CD8-positive, alpha-beta T cell (primary cell): ENCODE measurements at regions of chr12 and their contacts with region 1.

Region 1: GRCh38 chr12:56041552-56042429 is at the start of gene RPS26:
- DNase-seq: peak; percentile 79 to 99 (median 92)
- ATAC-seq: peak; percentile 93
- H3K4me3 ChIP-seq: peak within 1 kb of the TSS; percentile 71 to 83
- H3K4me3 Mint-ChIP-seq: peak within 1 kb of the TSS; percentile 99
- H3K27ac ChIP-seq: peak within 1 kb of the TSS; percentile 75 to 95
- H3K27ac Mint-ChIP-seq: peak within 1 kb of the TSS; percentile 99
- H3K4me1 ChIP-seq: peaks cover 29% of the 10 kb centered on the region
- H3K4me1 Mint-ChIP-seq: peaks cover 42% of the 10 kb centered on the region
- H3K27me3 ChIP-seq: no peaks in the 10 kb centered on the region
- H3K27me3 Mint-ChIP-seq: no peaks in the 10 kb centered on the region
- CTCF ChIP-seq: peak; percentile 48
- total RNA-seq, gene RPS26: 33.8 to 36.7 TPM

Region 2: DNA sequence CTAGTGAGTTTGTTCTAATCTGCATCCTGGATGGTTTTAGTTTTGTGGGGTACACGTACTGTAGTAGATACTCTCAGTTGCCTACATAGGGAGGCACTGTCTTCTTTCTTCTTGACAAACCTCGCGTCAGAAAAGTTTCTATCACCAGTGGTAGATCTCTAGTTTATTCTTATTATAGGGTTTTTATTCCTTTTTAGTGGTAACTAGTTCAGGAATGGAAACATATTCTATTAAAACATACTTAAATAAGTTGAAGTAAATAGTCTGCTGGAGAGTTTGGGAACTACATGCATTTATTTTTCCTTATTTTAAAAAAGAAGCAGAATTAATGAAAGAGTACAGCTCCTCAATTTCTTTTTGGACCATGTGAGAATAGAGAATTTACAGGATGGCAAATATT is 949.2 kb before region 1 on chr12:
- CTCF ChIA-PET with region 1: no interaction called
- POLR2A ChIA-PET with region 1: no interaction called
- intact Hi-C with region 1: no loop called
- DNase-seq: no peak
- ATAC-seq: no peak
- H3K4me3 ChIP-seq: no peak overlapping the region
- H3K4me3 Mint-ChIP-seq: no peak overlapping the region
- H3K27ac ChIP-seq: no peak overlapping the region
- H3K27ac Mint-ChIP-seq: no peak overlapping the region
- H3K4me1 ChIP-seq: no peaks in the 10 kb centered on the region
- H3K4me1 Mint-ChIP-seq: no peaks in the 10 kb centered on the region
- H3K27me3 ChIP-seq: no peaks in the 10 kb centered on the region
- H3K27me3 Mint-ChIP-seq: peaks cover 20% of the 10 kb centered on the region
- CTCF ChIP-seq: no peak

Region 3: DNA sequence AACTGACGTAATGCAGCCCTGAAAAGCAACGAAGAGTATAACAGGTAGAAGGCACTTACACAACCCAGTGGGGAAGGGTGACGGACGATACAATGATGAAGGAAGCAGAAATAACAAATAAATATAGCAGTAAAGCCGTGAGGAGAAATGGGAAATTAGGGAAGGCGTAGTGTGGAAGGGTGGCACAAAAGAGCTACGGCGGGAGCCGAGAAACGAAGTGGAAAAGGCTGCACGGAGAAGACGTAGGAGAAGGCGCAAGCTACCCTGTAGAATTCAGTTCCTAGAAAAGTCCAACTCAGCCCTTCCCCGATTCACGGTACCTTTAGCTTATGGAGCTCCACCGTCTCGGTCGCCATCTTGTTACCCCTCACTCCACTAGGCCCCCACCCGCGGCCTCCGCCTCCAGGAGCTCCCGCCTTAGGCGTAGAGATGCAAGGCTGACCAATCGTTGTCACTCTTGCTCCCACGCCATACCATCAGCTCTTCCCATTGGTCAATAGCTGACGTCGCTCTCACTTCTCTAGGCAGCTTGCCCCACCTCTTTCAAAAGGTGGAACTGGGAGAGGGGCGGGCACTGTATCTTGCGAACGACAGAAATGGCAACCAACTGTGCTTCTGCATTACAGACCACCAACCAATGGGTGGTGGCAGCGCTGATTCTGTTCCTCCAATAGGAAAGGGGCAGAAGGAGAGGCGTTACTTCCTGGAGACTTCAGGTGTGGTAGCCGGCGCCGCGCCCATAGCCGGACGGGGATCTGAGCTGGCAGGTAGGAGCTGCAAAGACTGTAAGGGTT is 224.2 kb before region 1 on chr12 and contains the starts of genes ORMDL2 and SARNP:
- CTCF ChIA-PET with region 1: interaction called, 5 read pairs
- POLR2A ChIA-PET with region 1: no interaction called
- intact Hi-C with region 1: loop called (anchors 1 kb)
- DNase-seq: peak; percentile 88 to 100 (median 94)
- ATAC-seq: peak; percentile 91
- H3K4me3 ChIP-seq: peak within 1 kb of the TSS; percentile 81 to 89
- H3K4me3 Mint-ChIP-seq: no peak within 1 kb of the TSS
- H3K27ac ChIP-seq: peak within 1 kb of the TSS; percentile 81 to 89
- H3K27ac Mint-ChIP-seq: no peak within 1 kb of the TSS
- H3K4me1 ChIP-seq: peaks cover 38% of the 10 kb centered on the region
- H3K4me1 Mint-ChIP-seq: peaks cover 44% of the 10 kb centered on the region
- H3K27me3 ChIP-seq: no peaks in the 10 kb centered on the region
- H3K27me3 Mint-ChIP-seq: no peaks in the 10 kb centered on the region
- CTCF ChIP-seq: no peak
- total RNA-seq, gene ORMDL2: 13.2 to 15.1 TPM
- total RNA-seq, gene SARNP: 48.0 to 50.3 TPM

Region 4: DNA sequence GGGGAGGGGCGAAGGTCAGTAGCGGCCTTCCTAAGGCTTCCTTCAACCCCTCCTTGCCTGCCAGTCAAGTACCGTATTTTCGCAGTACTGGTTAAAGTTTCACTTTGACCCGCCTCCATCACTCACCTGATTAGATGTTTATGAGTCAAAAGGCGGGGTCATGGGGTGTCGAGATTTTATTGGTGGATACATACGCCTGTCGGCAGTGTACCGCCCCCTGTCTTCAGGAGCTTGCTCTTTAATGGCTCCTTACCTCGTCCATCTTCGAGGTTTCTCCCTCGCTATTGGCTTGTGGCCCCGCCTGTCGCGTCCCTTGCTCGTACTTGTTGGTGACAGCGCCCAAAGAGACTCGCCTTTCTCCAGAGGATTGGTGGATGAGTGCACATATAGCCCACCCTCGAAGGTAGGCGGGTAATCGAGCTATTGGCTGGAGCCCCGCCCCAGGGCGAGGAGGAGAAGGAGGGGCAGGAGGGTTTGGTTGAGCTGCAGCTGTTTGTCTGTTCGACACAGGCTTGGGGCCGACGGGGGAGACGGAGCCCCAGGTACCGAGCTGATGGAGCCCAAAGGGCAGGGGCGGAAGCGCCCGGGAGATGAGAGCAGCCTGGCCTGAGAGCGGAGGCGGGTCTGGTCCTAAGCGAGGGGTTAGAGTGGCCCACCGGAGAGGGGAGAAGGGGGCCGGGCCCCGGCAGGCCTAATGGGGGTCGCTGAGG is 68.0 kb before region 1 on chr12 and contains the start of gene RAB5B:
- CTCF ChIA-PET with region 1: interaction called, 3 read pairs
- POLR2A ChIA-PET with region 1: interaction called, 5 read pairs
- intact Hi-C with region 1: loop called in 1 of 2 experiments (anchors 1 kb)
- DNase-seq: peak; percentile 94 to 100 (median 97)
- ATAC-seq: peak; percentile 87
- H3K4me3 ChIP-seq: peak within 1 kb of the TSS; percentile 81 to 84
- H3K4me3 Mint-ChIP-seq: no peak within 1 kb of the TSS
- H3K27ac ChIP-seq: peak within 1 kb of the TSS; percentile 76 to 90
- H3K27ac Mint-ChIP-seq: no peak within 1 kb of the TSS
- H3K4me1 ChIP-seq: peaks cover 18% of the 10 kb centered on the region
- H3K4me1 Mint-ChIP-seq: peaks cover 27% of the 10 kb centered on the region
- H3K27me3 ChIP-seq: no peaks in the 10 kb centered on the region
- H3K27me3 Mint-ChIP-seq: no peaks in the 10 kb centered on the region
- CTCF ChIP-seq: no peak
- total RNA-seq, gene RAB5B: 16.1 to 16.8 TPM

Region 5: GRCh38 chr12:56021889-56022497 is 19.8 kb before region 1 on chr12:
- CTCF ChIA-PET with region 1: no interaction called
- POLR2A ChIA-PET with region 1: no interaction called
- intact Hi-C with region 1: no loop called
- DNase-seq: no peak
- ATAC-seq: peak; percentile 23
- H3K4me3 ChIP-seq: peak overlapping the region; percentile 11 to 17
- H3K4me3 Mint-ChIP-seq: peak overlapping the region; percentile 80
- H3K27ac ChIP-seq: no peak overlapping the region
- H3K27ac Mint-ChIP-seq: peak overlapping the region; percentile 69
- H3K4me1 ChIP-seq: peaks cover 21% of the 10 kb centered on the region
- H3K4me1 Mint-ChIP-seq: peaks cover 17% of the 10 kb centered on the region
- H3K27me3 ChIP-seq: no peaks in the 10 kb centered on the region
- H3K27me3 Mint-ChIP-seq: no peaks in the 10 kb centered on the region
- CTCF ChIP-seq: no peak

Region 6: GRCh38 chr12:56078990-56079664 is 37.3 kb after region 1 on chr12:
- CTCF ChIA-PET with region 1: interaction called, 3 read pairs
- POLR2A ChIA-PET with region 1: interaction called, 3 read pairs
- intact Hi-C with region 1: loop called in 1 of 2 experiments (anchors 2 kb)
- DNase-seq: peak; percentile 10 to 74 (median 52)
- ATAC-seq: peak; percentile 64
- H3K4me3 ChIP-seq: peak overlapping the region; percentile 60 to 72
- H3K4me3 Mint-ChIP-seq: peak overlapping the region; percentile 85
- H3K27ac ChIP-seq: no peak overlapping the region
- H3K27ac Mint-ChIP-seq: no peak overlapping the region
- H3K4me1 ChIP-seq: peaks cover 18% of the 10 kb centered on the region
- H3K4me1 Mint-ChIP-seq: peaks cover 14% of the 10 kb centered on the region
- H3K27me3 ChIP-seq: peaks cover 3 to 12% of the 10 kb centered on the region in 2 experiments
- H3K27me3 Mint-ChIP-seq: peaks cover 2% of the 10 kb centered on the region
- CTCF ChIP-seq: peak; percentile 56

Region 7: DNA sequence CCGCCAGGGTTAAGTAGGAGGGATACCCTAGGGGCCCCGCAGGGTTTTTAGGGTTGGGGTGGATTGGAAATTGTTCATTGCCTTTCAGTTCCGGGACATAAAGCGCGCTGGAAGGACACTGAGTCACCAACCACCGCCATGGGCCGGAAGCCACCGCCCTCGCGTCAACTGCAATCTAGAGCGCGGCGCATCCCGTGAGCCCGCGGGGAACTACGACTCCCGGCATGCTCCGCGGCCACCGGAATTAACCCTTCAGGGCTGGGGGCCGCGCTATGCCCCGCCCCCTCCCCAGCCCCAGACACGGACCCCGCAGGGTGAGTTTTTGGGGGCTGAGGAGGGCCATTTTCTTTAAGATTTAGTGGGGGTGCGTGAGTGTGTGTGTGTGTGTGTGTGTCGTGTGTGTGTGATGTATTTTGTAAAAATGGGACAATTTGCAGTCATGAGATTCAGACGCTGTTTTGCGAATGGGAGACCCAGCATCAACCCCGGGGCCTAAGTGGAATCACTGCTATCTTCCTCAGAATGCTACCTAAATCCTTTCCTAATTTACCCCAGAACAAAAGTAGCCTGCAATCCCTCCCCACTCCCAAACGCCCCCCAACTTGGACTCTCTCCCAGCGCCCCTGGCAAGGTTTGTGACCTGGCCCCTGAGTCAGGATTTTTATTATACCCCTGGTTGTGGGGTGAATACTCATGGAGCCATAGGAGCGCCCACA is 110.7 kb after region 1 on chr12 and contains the start of gene MYL6B:
- CTCF ChIA-PET with region 1: interaction called, 3 read pairs
- POLR2A ChIA-PET with region 1: no interaction called
- intact Hi-C with region 1: loop called in 1 of 2 experiments (anchors 1 kb)
- DNase-seq: peak; percentile 80 to 96 (median 93)
- ATAC-seq: peak; percentile 90
- H3K4me3 ChIP-seq: peak within 1 kb of the TSS; percentile 65 to 95
- H3K4me3 Mint-ChIP-seq: peak within 1 kb of the TSS; percentile 90
- H3K27ac ChIP-seq: peak within 1 kb of the TSS; percentile 75 to 90
- H3K27ac Mint-ChIP-seq: peak within 1 kb of the TSS; percentile 99
- H3K4me1 ChIP-seq: peaks cover 30% of the 10 kb centered on the region
- H3K4me1 Mint-ChIP-seq: peaks cover 29% of the 10 kb centered on the region
- H3K27me3 ChIP-seq: no peaks in the 10 kb centered on the region
- H3K27me3 Mint-ChIP-seq: no peaks in the 10 kb centered on the region
- CTCF ChIP-seq: no peak
- total RNA-seq, gene MYL6B: 4.0 to 5.9 TPM

Region 8: GRCh38 chr12:56359851-56360767 is 318.3 kb after region 1 on chr12 and contains the start of gene STAT2:
- CTCF ChIA-PET with region 1: no interaction called
- POLR2A ChIA-PET with region 1: no interaction called
- intact Hi-C with region 1: loop called in 1 of 2 experiments (anchors 1 kb)
- DNase-seq: peak; percentile 98 to 100 (median 99)
- ATAC-seq: peak; percentile 93
- H3K4me3 ChIP-seq: peak within 1 kb of the TSS; percentile 78 to 81
- H3K4me3 Mint-ChIP-seq: peak within 1 kb of the TSS; percentile 95
- H3K27ac ChIP-seq: peak within 1 kb of the TSS; percentile 76 to 78
- H3K27ac Mint-ChIP-seq: peak within 1 kb of the TSS; percentile 95
- H3K4me1 ChIP-seq: peaks cover 23% of the 10 kb centered on the region
- H3K4me1 Mint-ChIP-seq: peaks cover 34% of the 10 kb centered on the region
- H3K27me3 ChIP-seq: no peaks in the 10 kb centered on the region
- H3K27me3 Mint-ChIP-seq: no peaks in the 10 kb centered on the region
- CTCF ChIP-seq: no peak
- total RNA-seq, gene STAT2: 71.8 to 81.9 TPM